Transverse colon (tissue), 4 donors: ENCODE measurements at regions of chr11 and their contacts with region 1.

Region 1: DNA sequence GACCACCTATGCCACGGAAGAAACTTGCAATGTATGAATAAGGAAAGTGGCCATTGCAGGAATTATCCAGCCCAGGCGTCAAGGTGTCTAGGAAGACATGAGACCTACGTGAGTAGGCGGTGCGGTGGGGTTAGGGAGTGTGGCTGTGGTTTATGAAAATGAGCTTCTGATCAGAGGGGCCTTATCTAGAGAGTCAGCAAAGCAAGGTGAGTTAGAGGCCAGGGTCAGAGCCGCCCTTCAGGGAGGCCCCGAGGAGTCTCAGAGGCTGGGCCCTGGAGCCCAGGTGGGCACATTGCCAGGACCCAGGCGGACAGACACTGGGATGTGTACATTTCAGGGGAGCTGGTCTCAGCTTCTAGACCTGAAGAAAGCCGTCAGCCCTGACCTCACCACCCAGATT is 13.8 kb upstream of the LINC01488 start:
- DNase-seq: no peak
- H3K4me3 ChIP-seq: no peak overlapping the region
- H3K27ac ChIP-seq: no peak overlapping the region
- H3K4me1 ChIP-seq: peaks cover 11 to 51% (median 47%) of the 10 kb centered on the region in 4 donors
- H3K27me3 ChIP-seq: no peaks in the 10 kb centered on the region
- CTCF ChIP-seq: no peak
- EP300 ChIP-seq: no peak
- POLR2A ChIP-seq: no peak

Region 2: DNA sequence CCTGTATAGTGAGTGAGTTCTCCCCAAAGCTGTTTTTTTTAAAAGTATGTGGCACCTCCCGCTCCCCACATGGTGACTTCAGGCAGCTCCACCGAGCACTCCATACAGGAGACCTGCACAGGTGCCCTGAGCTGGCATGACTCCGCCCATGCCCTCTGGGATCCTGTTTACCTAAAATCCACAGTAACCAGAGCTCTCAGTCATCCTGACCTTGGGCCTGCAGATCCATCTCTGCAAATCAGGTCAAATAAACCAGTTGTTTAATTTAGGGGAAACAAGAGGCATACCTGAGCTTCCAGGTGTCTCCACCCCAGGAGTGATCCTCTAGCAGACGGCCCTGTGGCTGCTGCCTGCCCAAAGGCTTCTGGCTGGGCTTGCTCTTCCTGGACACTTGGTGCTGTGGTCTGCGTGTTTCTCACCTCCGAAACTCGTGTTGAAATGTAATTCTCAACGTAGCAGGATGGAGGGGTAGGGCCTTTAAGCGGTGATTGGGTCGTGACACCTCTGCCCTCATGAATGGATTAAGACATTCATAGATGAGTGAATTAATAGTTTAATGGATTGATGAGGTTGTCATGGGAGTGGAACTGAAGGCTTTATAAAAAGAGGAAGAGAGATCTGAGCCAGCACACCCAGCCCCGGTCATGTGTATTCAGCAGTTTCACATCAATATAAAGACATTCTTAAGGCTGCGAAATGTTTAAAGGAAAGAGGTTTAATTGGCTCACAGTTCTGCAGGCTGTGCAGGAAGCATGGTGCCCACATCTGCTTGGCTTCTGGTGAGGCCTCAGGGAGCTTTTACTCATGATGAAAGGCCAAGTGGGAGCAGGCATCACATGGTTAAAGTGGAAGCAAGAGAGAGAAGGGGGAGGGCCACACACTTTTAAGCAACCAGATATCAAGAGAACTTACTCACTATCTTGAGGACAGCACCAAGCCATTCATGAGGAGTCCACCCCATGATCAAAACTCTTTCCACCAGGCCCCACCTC is 47.9 kb after region 1 on chr11:
- in situ Hi-C with region 1: no loop called
- intact Hi-C with region 1: loop called (anchors 1 kb)
- DNase-seq: no peak
- H3K4me3 ChIP-seq: no peak overlapping the region
- H3K27ac ChIP-seq: no peak overlapping the region
- H3K4me1 ChIP-seq: no peaks in the 10 kb centered on the region
- H3K27me3 ChIP-seq: no peaks in the 10 kb centered on the region
- CTCF ChIP-seq: no peak
- EP300 ChIP-seq: no peak
- POLR2A ChIP-seq: no peak